ENCODE measurements at regions of chr2 and their contacts with region 1.

Region 1: DNA sequence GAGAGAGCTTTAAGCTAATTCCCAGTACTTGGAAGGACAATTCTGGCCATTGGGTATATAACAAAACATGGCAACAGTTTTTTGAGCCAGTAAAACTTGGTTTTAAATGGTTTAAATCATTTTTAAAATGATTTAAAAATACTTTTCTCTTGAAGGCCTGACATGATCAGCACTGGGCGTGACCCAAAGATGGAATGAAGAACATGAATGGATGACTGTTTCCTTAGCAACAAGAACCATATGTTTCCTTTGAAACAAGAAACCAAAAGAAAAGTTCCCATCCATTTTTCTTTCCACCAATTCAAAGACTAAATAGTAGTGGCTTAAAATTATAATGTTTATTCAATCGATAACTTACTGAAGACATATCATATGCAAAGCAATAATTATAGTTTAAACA is 348.3 kb upstream of the FIGN start:
- DNase-seq: no peak
- ATAC-seq: no peak

Region 2: GRCh38 chr2:164112105-164112504 is 28.0 kb after region 1 on chr2:
- intact Hi-C with region 1: loop called (anchors 1 kb)
- DNase-seq: no peak
- ATAC-seq: no peak

Measured in sciatic nerve (tissue), 2 donors.